ENCODE measurements at regions of chr13 and their contacts with region 1.

Region 1: DNA sequence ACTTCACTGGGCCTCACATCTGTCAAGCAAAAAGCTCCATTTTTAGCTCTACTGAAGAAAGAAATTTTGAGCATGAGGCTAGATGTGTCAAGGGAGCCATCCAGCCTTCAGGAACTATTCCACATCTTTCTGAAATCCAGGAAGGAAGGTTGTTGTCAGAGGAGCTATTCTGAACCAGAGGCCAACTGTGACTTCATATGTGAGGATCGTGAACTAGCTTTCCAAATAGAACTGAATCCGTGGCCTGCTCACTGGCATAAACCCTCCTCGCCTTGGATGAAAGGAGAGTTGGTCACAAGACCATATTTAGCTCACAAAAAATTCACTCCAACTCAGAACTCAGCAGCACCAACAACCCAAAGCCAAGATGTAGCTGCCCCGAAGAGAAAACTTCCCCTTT is 195.8 kb downstream of the FOXO1 start:
- DNase-seq: peak in 1 of 2 donors; percentile 88
- H3K4me3 ChIP-seq: no peak overlapping the region
- H3K27ac ChIP-seq: peak overlapping the region; percentile 90
- H3K4me1 ChIP-seq: peaks cover 8 to 14% of the 10 kb centered on the region in 2 donors
- H3K27me3 ChIP-seq: no peaks in the 10 kb centered on the region
- CTCF ChIP-seq: no peak

Region 2: DNA sequence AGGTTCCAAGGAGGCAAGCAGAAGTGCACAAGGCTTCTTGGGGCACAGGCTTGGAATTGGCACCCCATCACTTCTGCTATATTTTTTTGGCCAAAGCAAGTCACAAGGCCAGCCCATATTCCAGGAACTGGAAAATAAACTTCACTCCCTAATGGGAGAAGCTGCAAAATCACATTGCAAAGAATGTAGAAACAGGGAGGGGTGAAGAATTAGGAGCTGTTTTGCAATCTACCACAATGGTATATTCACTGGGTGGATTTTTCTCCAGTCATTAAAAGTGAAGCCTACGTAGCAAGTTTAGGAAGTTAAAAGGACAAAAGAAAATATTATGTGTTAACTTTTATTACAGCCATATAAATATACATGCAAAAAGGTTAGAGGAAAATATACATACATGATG is 350.4 kb before region 1 on chr13:
- intact Hi-C with region 1: loop called (anchors 5 kb)
- DNase-seq: no peak
- H3K4me3 ChIP-seq: no peak overlapping the region
- H3K27ac ChIP-seq: peak overlapping the region; percentile 61 to 65
- H3K4me1 ChIP-seq: peaks cover 2 to 38% of the 10 kb centered on the region in 2 donors
- H3K27me3 ChIP-seq: no peaks in the 10 kb centered on the region
- CTCF ChIP-seq: no peak

Region 3: DNA sequence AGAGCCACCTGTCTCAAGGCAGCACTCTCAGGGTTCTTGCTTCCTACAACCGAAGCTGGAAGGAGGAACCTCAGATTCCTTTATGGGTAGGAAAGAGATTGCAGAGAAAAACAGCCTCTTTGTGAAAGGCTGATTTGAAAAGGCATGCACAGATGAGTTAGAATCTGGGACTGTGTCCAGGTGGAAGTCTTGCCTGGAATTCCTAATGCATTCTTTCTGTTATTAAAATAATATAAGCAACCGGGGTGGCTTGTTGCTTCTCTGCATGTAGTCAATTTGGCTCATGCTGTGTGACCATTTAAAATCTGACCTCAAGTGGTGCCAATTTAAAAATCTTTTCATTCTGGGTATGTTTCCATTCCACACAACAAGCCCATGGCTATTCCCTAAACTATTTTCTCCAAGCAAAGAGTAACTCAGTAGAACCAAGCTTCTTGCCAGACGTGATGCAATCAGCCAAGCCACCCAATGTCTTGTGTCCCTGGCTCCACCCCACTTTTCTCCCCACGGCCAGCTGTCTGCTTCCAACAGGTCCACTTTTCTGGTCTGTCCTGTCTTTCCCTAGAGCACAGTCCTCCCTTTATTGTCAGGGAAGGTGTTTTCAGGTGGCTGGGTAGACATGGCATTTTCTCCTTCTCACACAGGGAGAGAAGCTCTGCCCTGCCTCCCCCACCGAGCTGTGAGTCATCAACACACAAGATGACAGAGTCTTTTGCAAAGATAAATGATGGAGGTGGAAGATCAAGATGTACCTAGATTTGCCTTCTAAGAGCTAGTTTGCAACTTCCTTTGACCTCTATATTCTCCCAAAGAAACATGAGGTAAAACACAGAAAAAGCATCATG is 198.5 kb before region 1 on chr13:
- intact Hi-C with region 1: loop called (anchors 5 kb)
- DNase-seq: peak; percentile 27 to 94
- H3K4me3 ChIP-seq: peak overlapping the region in 1 of 2 donors; percentile 18
- H3K27ac ChIP-seq: peak overlapping the region; percentile 88 to 90
- H3K4me1 ChIP-seq: peaks cover 5 to 29% of the 10 kb centered on the region in 2 donors
- H3K27me3 ChIP-seq: no peaks in the 10 kb centered on the region
- CTCF ChIP-seq: no peak

Region 4: DNA sequence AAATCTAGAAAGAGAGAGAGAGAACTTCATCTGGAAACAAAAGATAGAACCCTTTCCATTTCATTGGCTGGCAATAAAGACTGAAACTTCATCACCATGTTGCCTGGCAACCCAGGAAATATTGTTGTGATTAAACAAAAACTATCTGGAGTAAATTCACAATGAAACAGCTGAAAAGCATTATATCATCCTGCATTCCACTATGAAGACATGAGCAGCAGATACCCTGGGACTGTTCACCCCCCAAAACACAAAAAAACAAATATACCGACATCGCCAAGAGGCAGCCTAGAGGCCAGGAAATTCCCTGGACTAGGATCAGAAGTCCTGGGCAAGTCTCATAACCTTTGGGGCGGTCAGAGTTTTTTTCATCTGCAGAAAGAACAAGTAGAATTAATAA is 37.5 kb after region 1 on chr13:
- intact Hi-C with region 1: no loop called
- DNase-seq: no peak
- H3K4me3 ChIP-seq: no peak overlapping the region
- H3K27ac ChIP-seq: peak overlapping the region in 1 of 2 donors; percentile 48
- H3K4me1 ChIP-seq: peaks cover 0 to 9% of the 10 kb centered on the region in 2 donors
- H3K27me3 ChIP-seq: no peaks in the 10 kb centered on the region
- CTCF ChIP-seq: no peak

Region 5: GRCh38 chr13:40992678-40993518 is 522.2 kb after region 1 on chr13:
- intact Hi-C with region 1: no loop called
- DNase-seq: no peak
- H3K4me3 ChIP-seq: no peak overlapping the region
- H3K27ac ChIP-seq: no peak overlapping the region
- H3K4me1 ChIP-seq: peaks cover 0 to 4% of the 10 kb centered on the region in 2 donors
- H3K27me3 ChIP-seq: no peaks in the 10 kb centered on the region
- CTCF ChIP-seq: no peak

Measured in ascending aorta (tissue), 2 donors.